ENCODE measurements at regions of chr11 and their contacts with region 1.

Region 1: DNA sequence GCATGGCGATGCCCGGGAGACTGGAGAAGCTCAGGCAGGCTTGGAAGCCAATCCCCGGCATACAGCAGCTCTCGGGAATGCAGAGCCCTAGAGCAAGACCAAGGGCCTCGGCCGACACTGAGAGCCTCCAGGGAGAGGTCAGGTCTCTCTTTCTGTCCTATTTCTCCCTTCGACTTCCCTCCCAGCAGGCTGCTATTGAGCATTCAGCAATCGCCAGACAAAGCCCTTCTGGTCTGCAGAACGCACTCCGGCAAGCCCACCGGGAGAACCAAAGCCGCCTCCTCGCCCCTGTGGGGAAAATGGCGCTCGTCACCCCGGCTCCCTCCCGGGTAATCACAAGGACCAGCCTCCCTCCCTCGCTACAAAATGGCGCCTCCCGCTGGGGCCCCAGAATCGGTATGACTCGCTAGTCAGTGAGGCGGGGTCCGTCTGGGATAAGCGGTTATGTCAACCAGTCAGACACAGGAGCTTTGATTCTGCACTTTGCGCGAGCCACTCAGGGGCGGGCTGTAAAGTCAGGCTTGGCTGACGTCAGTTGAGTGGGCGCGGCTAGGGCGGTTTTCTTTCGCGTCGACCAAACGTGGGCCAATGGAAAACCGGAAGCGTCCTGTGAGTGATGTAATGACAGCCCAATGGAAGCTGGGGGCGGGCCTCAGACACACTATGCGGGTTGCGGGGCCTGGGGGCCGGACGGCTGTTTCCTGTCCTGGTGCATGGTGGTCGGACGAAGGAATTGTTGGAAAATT is at the start of gene ZNF143:
- DNase-seq: peak; percentile 95 to 100 (median 100)
- ATAC-seq: peak; percentile 92
- H3K4me3 ChIP-seq: peak within 1 kb of the TSS; percentile 93
- H3K4me3 Mint-ChIP-seq: peak within 1 kb of the TSS; percentile 84 to 98 (median 96)
- H3K27ac ChIP-seq: peak within 1 kb of the TSS; percentile 98
- H3K27ac Mint-ChIP-seq: peak within 1 kb of the TSS; percentile 97 to 99 (median 99)
- H3K4me1 ChIP-seq: peaks cover 9 to 19% of the 10 kb centered on the region in 2 donors
- H3K4me1 Mint-ChIP-seq: peaks cover 21 to 34% (median 26%) of the 10 kb centered on the region in 7 donors
- H3K27me3 ChIP-seq: no peaks in the 10 kb centered on the region
- H3K27me3 Mint-ChIP-seq: no peaks in the 10 kb centered on the region
- total RNA-seq, gene ZNF143: 29.6 to 47.5 (median 34.4) TPM

Region 2: GRCh38 chr11:7986768-7987559 is 1473.5 kb before region 1 on chr11 and contains the start of gene EIF3F:
- CTCF ChIA-PET with region 1: no interaction called
- POLR2A ChIA-PET with region 1: no interaction called
- intact Hi-C with region 1: loop called in 1 of 2 experiments (anchors 2 kb)
- DNase-seq: peak; percentile 64 to 98 (median 95)
- ATAC-seq: peak; percentile 98
- H3K4me3 ChIP-seq: peak within 1 kb of the TSS; percentile 70
- H3K4me3 Mint-ChIP-seq: peak within 1 kb of the TSS; percentile 85 to 99 (median 92)
- H3K27ac ChIP-seq: peak within 1 kb of the TSS; percentile 78
- H3K27ac Mint-ChIP-seq: peak within 1 kb of the TSS; percentile 88 to 100 (median 97)
- H3K4me1 ChIP-seq: peaks cover 20 to 31% of the 10 kb centered on the region in 2 donors
- H3K4me1 Mint-ChIP-seq: peaks cover 29 to 64% (median 49%) of the 10 kb centered on the region in 7 donors
- H3K27me3 ChIP-seq: no peaks in the 10 kb centered on the region
- H3K27me3 Mint-ChIP-seq: no peaks in the 10 kb centered on the region
- total RNA-seq, gene EIF3F: 222 to 405 (median 353) TPM

Region 3: GRCh38 chr11:8934749-8935478 is 525.6 kb before region 1 on chr11:
- CTCF ChIA-PET with region 1: no interaction called
- POLR2A ChIA-PET with region 1: no interaction called
- intact Hi-C with region 1: no loop called
- DNase-seq: no peak
- ATAC-seq: no peak
- H3K4me3 ChIP-seq: no peak overlapping the region
- H3K4me3 Mint-ChIP-seq: peak overlapping the region in 8 of 10 donors; percentile 19 to 67 (median 50)
- H3K27ac ChIP-seq: no peak overlapping the region
- H3K27ac Mint-ChIP-seq: peak overlapping the region in 6 of 9 donors; percentile 7 to 82 (median 55)
- H3K4me1 ChIP-seq: no peaks in the 10 kb centered on the region
- H3K4me1 Mint-ChIP-seq: peaks cover 0 to 8% (median 4%) of the 10 kb centered on the region in 7 donors
- H3K27me3 ChIP-seq: no peaks in the 10 kb centered on the region
- H3K27me3 Mint-ChIP-seq: no peaks in the 10 kb centered on the region

Region 4: GRCh38 chr11:9003573-9004309 is 456.8 kb before region 1 on chr11 and contains the start of gene NRIP3:
- CTCF ChIA-PET with region 1: no interaction called
- POLR2A ChIA-PET with region 1: interaction called, 3 read pairs
- intact Hi-C with region 1: loop called (anchors 1 to 2 kb)
- DNase-seq: peak; percentile 72 to 86 (median 80)
- ATAC-seq: peak; percentile 89
- H3K4me3 ChIP-seq: peak within 1 kb of the TSS; percentile 32
- H3K4me3 Mint-ChIP-seq: peak within 1 kb of the TSS; percentile 81 to 90 (median 86)
- H3K27ac ChIP-seq: no peak within 1 kb of the TSS
- H3K27ac Mint-ChIP-seq: peak within 1 kb of the TSS; percentile 12 to 87 (median 62)
- H3K4me1 ChIP-seq: peaks cover 8 to 12% of the 10 kb centered on the region in 2 donors
- H3K4me1 Mint-ChIP-seq: peaks cover 13 to 31% (median 20%) of the 10 kb centered on the region in 7 donors
- H3K27me3 ChIP-seq: peaks cover 3 to 8% of the 10 kb centered on the region in 2 donors
- H3K27me3 Mint-ChIP-seq: peaks cover 30 to 56% (median 41%) of the 10 kb centered on the region in 5 donors
- total RNA-seq, gene NRIP3: 0.59 to 11.0 (median 3.4) TPM

Region 5: DNA sequence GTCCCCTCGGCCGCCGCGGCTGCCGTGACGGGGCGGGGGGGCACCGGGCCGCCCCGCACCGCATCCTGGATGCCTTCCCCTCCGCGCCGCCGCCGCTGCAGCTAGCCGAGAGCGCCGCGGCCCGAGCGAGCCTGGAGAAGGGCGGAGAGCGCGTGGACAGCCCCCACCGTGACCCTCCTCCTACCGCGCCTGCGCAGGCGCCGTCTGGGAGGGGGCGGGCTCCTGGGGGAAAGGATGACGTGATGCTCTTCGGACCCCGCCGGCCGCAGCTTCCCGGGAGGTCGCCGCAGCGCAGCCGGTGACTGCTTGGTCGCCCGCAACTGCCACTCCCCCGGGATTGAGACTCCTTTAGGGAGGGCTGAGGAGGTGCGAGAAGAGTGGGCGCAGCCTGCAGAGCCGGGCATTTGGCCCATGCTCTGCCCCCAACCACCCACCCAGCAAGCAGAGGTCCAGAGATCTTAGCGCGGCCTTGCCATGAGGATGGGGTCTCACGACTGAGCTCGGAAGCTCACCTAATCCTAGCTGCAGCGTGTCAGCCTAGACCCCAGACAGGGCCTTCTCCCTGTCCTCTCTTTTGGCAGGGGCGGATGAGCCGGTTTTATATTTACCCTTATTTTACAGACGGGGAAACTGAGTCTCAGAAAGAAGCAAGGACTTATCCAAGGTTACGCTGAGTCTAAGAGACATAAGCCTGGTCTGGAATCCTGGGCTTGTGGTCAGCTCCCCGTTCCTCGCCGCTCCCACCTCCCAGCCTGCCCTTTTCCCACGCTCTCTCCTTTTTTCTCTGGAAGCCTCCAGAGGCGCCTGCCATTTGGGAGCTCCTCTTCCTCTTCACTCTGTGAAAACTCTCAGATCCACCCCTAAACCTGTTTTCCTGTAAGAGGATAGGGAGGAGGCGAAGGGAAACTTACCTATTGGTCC is 195.0 kb before region 1 on chr11 and contains the start of gene DENND5A:
- CTCF ChIA-PET with region 1: no interaction called
- POLR2A ChIA-PET with region 1: interaction called, 10 read pairs
- intact Hi-C with region 1: loop called in 1 of 2 experiments (anchors 1 kb)
- DNase-seq: peak; percentile 12 to 65 (median 34)
- ATAC-seq: peak; percentile 74
- H3K4me3 ChIP-seq: peak within 1 kb of the TSS; percentile 72
- H3K4me3 Mint-ChIP-seq: peak within 1 kb of the TSS; percentile 87 to 100 (median 97)
- H3K27ac ChIP-seq: peak within 1 kb of the TSS; percentile 72
- H3K27ac Mint-ChIP-seq: peak within 1 kb of the TSS; percentile 89 to 99 (median 95)
- H3K4me1 ChIP-seq: peaks cover 11 to 22% of the 10 kb centered on the region in 2 donors
- H3K4me1 Mint-ChIP-seq: peaks cover 25 to 43% (median 39%) of the 10 kb centered on the region in 7 donors
- H3K27me3 ChIP-seq: no peaks in the 10 kb centered on the region
- H3K27me3 Mint-ChIP-seq: peaks cover 0 to 46% (median 0%) of the 10 kb centered on the region in 5 donors
- total RNA-seq, gene DENND5A: 65.0 to 178 (median 108) TPM

Region 6: DNA sequence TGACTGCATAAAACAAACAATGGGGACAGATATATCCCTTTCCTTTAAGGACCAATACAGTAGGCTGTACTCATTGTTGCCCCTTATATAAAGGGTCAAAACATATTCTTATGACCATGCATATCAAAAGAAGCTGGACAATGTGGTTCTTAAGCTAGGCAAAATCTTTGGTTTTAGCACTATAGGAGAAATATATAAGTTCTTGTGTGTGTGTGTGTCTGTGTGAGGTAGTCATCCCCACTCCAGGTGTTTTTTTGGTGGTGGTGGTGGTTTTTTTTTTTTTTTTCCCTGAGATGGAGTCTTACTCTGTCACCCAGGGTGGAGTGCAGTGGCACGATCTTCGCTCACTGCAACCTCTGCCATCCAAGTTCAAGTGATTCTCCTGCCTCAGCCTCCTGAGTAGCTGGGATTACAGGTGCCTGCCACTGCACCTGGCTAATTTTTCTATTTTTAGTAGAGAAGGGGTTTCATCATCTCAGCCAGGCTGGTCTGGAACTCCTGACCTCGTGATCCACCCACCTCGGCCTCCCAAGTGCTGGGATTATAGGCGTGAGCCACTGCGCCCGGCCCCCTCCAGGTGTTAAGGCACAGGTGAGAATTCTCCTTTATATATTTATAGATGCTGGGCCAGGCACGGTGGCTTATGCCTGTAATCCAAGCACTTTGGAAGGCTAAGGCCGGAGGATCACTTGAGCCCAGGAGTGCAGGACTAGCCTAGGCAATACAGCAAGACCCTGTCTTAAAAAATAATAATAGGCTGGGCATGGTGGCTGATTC is 11.7 kb before region 1 on chr11:
- CTCF ChIA-PET with region 1: no interaction called
- POLR2A ChIA-PET with region 1: interaction called, 10 read pairs
- intact Hi-C with region 1: no loop called
- DNase-seq: no peak
- ATAC-seq: no peak
- H3K4me3 ChIP-seq: no peak overlapping the region
- H3K4me3 Mint-ChIP-seq: no peak overlapping the region
- H3K27ac ChIP-seq: no peak overlapping the region
- H3K27ac Mint-ChIP-seq: no peak overlapping the region
- H3K4me1 ChIP-seq: no peaks in the 10 kb centered on the region
- H3K4me1 Mint-ChIP-seq: peaks cover 0 to 20% (median 7%) of the 10 kb centered on the region in 7 donors
- H3K27me3 ChIP-seq: no peaks in the 10 kb centered on the region
- H3K27me3 Mint-ChIP-seq: no peaks in the 10 kb centered on the region

Region 7: DNA sequence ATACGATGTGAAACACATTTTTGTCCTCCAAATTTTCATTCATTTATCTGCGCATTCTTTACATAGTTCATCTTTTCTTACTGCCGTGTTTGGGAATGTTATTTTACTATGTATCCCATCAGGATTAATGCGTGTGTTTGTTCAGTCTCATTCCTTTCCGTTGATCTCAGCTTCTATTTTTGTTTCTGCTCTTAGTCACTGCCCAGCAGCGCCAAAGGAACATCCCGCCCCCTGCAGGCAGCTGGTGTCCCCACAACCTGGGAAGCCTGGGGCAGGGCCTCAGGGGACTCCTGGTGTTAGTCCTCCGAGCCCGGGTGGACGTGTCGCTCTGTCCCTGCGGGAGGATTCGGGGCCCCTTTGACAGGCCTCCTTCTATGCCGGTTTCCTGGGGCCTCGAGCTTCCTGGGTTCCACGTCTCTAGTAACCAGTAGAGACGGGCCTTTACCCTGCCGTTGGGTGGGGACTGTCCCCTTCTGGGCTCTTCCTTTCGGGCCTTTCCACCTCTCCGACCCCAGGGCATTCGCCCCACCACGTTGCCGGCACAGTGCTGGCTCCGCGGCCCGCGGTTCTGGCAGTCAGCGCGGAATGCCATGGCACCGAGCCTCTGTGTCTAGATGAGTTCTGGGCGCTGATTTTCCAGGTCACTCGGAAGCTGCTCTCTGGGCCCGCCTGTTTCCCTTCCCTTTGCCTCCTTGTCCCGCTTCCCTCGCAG is 152.8 kb after region 1 on chr11:
- CTCF ChIA-PET with region 1: no interaction called
- POLR2A ChIA-PET with region 1: no interaction called
- intact Hi-C with region 1: loop called (anchors 1 kb)
- DNase-seq: peak; percentile 63 to 88 (median 76)
- ATAC-seq: peak; percentile 70
- H3K4me3 ChIP-seq: peak overlapping the region; percentile 71
- H3K4me3 Mint-ChIP-seq: peak overlapping the region; percentile 94 to 99 (median 96)
- H3K27ac ChIP-seq: peak overlapping the region; percentile 75
- H3K27ac Mint-ChIP-seq: peak overlapping the region; percentile 82 to 98 (median 92)
- H3K4me1 ChIP-seq: peaks cover 0 to 14% of the 10 kb centered on the region in 2 donors
- H3K4me1 Mint-ChIP-seq: peaks cover 9 to 34% (median 18%) of the 10 kb centered on the region in 7 donors
- H3K27me3 ChIP-seq: no peaks in the 10 kb centered on the region
- H3K27me3 Mint-ChIP-seq: no peaks in the 10 kb centered on the region

Region 8: DNA sequence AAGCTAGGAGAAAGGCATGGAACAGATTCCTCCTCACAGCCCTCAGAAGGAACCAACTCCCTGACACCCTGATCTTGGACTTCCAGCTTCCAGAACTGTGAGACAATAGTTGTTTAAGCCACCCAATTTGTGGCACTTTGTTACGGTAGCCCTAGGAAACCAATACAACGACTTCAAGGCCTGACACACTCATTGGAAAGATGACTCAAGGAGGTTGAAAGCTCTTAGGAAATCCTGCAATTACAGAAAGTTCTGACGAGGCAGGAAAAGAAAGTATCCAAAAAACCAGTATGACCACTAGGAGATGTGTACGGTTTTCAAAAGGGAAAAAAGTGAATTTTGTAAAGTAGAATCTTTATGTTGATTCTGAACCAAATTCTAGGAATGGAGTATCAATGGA is 364.8 kb after region 1 on chr11:
- CTCF ChIA-PET with region 1: no interaction called
- POLR2A ChIA-PET with region 1: no interaction called
- intact Hi-C with region 1: no loop called
- DNase-seq: no peak
- ATAC-seq: no peak
- H3K4me3 ChIP-seq: no peak overlapping the region
- H3K4me3 Mint-ChIP-seq: no peak overlapping the region
- H3K27ac ChIP-seq: no peak overlapping the region
- H3K27ac Mint-ChIP-seq: no peak overlapping the region
- H3K4me1 ChIP-seq: no peaks in the 10 kb centered on the region
- H3K4me1 Mint-ChIP-seq: no peaks in the 10 kb centered on the region
- H3K27me3 ChIP-seq: no peaks in the 10 kb centered on the region
- H3K27me3 Mint-ChIP-seq: no peaks in the 10 kb centered on the region

Region 9: GRCh38 chr11:10450464-10451425 is 990.2 kb after region 1 on chr11:
- CTCF ChIA-PET with region 1: no interaction called
- POLR2A ChIA-PET with region 1: no interaction called
- intact Hi-C with region 1: loop called in 1 of 2 experiments (anchors 2 kb)
- DNase-seq: peak; percentile 34 to 66 (median 59)
- ATAC-seq: peak; percentile 66
- H3K4me3 ChIP-seq: peak overlapping the region; percentile 63
- H3K4me3 Mint-ChIP-seq: peak overlapping the region; percentile 88 to 96 (median 92)
- H3K27ac ChIP-seq: peak overlapping the region; percentile 84
- H3K27ac Mint-ChIP-seq: peak overlapping the region; percentile 87 to 97 (median 95)
- H3K4me1 ChIP-seq: peaks cover 24 to 44% of the 10 kb centered on the region in 2 donors
- H3K4me1 Mint-ChIP-seq: peaks cover 43 to 75% (median 68%) of the 10 kb centered on the region in 7 donors
- H3K27me3 ChIP-seq: no peaks in the 10 kb centered on the region
- H3K27me3 Mint-ChIP-seq: peaks cover 0 to 23% (median 0%) of the 10 kb centered on the region in 5 donors